Activated B cell treated with CpG ODN at 0.5 μM for 24 hours (primary cell): ENCODE measurements at regions of chr6 and their contacts with region 1.

Region 1: GRCh38 chr6:391559-392440 is at the start of gene IRF4:
- DNase-seq: no peak
- ATAC-seq: peak; percentile 74
- H3K4me3 Mint-ChIP-seq: peak within 1 kb of the TSS; percentile 98
- H3K27ac Mint-ChIP-seq: peak within 1 kb of the TSS; percentile 94
- H3K4me1 Mint-ChIP-seq: peaks cover 51% of the 10 kb centered on the region
- H3K27me3 Mint-ChIP-seq: no peaks in the 10 kb centered on the region
- CTCF ChIP-seq: no peak
- total RNA-seq, gene IRF4: 417 and 426 TPM in 2 replicates

Region 2: DNA sequence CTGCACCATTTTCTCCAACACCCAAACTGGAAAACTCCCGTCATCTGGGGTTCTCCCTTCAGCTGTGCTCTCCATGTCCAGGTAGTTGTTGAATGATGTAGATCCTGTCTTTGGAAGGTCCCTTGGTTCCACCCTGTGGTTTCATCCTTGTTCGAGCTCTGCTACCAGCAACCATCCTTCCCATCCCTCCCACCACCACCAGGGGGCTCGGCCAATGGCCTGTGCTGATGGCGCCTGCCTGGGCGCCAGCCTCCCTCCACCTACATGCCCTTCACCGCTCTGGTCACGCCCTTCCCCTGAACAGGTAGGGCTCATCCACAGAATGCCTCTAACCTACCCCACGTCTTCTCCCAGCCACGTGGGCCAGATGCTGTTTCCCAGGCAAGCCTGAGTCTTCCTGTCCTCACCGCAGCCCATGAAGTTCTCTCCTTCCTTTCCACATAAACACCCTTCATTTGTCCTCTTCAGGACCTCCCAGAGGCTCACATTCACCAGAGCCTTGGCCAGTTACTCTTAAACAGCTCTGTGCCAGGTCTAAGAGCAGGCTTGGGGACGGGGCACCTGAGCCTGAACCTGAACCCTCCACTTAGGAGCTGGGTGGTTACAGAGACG is 174.6 kb before region 1 on chr6:
- CTCF ChIA-PET with region 1: interaction called, 7 read pairs
- POLR2A ChIA-PET with region 1: interaction called, 137 read pairs
- intact Hi-C with region 1: loop called (anchors 1 kb)
- DNase-seq: no peak
- ATAC-seq: no peak
- H3K4me3 Mint-ChIP-seq: peak overlapping the region; percentile 61
- H3K27ac Mint-ChIP-seq: peak overlapping the region; percentile 90
- H3K4me1 Mint-ChIP-seq: peaks cover 81% of the 10 kb centered on the region
- H3K27me3 Mint-ChIP-seq: no peaks in the 10 kb centered on the region
- CTCF ChIP-seq: no peak

Region 3: DNA sequence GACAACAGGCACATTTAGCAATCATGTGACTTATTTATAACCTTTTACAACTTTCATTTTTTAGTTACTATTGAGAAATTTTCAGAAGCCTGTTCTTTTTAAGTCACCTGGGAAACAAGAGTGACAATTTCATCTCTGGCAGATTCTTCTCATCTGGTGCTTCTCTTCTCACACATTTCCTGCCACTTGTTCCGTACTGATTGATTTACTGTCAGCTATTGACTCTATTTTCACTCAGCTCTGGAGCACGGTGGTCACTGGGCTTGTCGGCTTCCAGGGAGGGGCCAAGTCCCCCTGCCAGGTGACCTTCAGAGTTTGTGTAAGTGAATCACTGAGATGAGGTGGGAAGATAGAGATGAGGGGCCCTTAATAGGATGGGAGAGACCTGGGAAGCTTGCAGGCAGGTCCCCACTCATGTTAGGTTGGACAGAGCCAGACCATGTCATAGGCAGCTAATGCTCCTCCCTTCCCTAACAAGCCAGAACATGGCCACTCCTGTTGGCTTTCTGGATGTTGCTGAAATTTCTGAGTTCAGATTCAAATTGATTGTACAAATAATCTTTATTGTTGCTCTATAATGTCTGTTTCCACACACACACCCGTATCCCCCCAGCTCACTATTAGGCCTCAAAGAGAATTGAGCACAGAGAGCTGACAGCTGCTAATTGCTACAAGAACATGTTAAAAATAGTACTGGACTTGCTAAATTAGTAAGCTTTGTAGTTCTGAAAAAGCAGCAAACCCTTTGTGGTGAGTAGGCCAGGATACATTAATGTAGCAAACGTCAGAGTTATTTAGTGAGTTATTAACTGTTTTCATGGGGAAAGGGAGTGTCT is 86.2 kb before region 1 on chr6:
- CTCF ChIA-PET with region 1: no interaction called
- POLR2A ChIA-PET with region 1: interaction called, 11 read pairs
- intact Hi-C with region 1: no loop called
- DNase-seq: no peak
- ATAC-seq: peak; percentile 69
- H3K4me3 Mint-ChIP-seq: no peak overlapping the region
- H3K27ac Mint-ChIP-seq: no peak overlapping the region
- H3K4me1 Mint-ChIP-seq: peaks cover 26% of the 10 kb centered on the region
- H3K27me3 Mint-ChIP-seq: no peaks in the 10 kb centered on the region
- CTCF ChIP-seq: no peak

Region 4: DNA sequence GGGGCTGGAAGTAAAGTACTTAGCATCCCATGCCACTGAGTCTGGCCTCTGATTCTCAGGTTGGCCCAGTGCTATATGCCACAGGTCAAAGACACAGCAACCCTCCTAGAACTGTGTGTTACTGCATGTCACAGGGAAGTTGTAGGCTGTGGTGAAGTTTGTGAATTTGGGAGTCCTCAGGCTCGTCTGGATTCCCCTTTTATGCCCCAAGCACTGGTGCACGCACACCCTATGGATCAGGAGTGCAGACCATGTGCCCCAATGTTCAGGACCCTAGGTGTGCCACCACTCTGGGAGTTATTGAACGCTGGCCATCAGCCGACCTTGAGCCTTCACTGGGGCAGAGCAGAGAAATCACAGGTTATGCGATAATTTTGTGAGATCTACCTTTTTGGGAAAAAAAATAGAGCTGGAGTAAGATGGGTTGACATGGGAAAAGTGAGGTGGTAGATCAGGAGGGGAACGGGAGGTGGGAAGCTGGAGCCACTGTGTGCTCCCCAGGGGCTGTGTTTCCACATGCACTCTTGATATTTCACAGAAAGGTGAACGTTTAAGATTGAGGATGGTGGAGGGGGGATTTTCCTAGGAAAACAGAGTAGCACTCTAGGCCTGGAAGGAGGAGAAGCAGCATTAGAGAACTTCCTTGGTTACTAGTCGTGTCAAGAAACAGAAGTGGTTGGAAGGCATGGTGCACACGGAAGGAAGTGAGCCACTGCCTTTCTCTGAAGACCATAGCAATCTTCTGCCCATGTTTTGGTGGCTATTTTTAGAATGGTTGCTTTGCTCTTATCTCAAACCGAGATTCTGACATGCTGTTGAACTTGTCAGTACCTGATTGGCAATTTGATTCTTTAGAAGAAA is 55.4 kb before region 1 on chr6:
- CTCF ChIA-PET with region 1: no interaction called
- POLR2A ChIA-PET with region 1: interaction called, 60 read pairs
- intact Hi-C with region 1: loop called (anchors 2 kb)
- DNase-seq: no peak
- ATAC-seq: peak; percentile 57
- H3K4me3 Mint-ChIP-seq: peak overlapping the region; percentile 62
- H3K27ac Mint-ChIP-seq: peak overlapping the region; percentile 78
- H3K4me1 Mint-ChIP-seq: peaks cover 75% of the 10 kb centered on the region
- H3K27me3 Mint-ChIP-seq: no peaks in the 10 kb centered on the region
- CTCF ChIP-seq: no peak

Region 5: GRCh38 chr6:373751-374724 is 17.8 kb before region 1 on chr6:
- CTCF ChIA-PET with region 1: interaction called, 5 read pairs
- POLR2A ChIA-PET with region 1: interaction called, 84 read pairs
- intact Hi-C with region 1: loop called (anchors 1 kb)
- DNase-seq: no peak
- ATAC-seq: no peak
- H3K4me3 Mint-ChIP-seq: no peak overlapping the region
- H3K27ac Mint-ChIP-seq: peak overlapping the region; percentile 8
- H3K4me1 Mint-ChIP-seq: peaks cover 48% of the 10 kb centered on the region
- H3K27me3 Mint-ChIP-seq: peaks cover 5% of the 10 kb centered on the region
- CTCF ChIP-seq: no peak

Region 6: GRCh38 chr6:484086-484745 is 92.4 kb after region 1 on chr6:
- CTCF ChIA-PET with region 1: interaction called, 4 read pairs
- POLR2A ChIA-PET with region 1: interaction called, 39 read pairs
- intact Hi-C with region 1: loop called (anchors 1 kb)
- DNase-seq: no peak
- ATAC-seq: peak; percentile 7
- H3K4me3 Mint-ChIP-seq: no peak overlapping the region
- H3K27ac Mint-ChIP-seq: peak overlapping the region; percentile 72
- H3K4me1 Mint-ChIP-seq: peaks cover 51% of the 10 kb centered on the region
- H3K27me3 Mint-ChIP-seq: no peaks in the 10 kb centered on the region
- CTCF ChIP-seq: no peak

Region 7: GRCh38 chr6:1381481-1382330 is 989.9 kb after region 1 on chr6:
- CTCF ChIA-PET with region 1: no interaction called
- POLR2A ChIA-PET with region 1: no interaction called
- intact Hi-C with region 1: loop called (anchors 5 kb)
- DNase-seq: peak; percentile 64
- ATAC-seq: peak; percentile 57
- H3K4me3 Mint-ChIP-seq: peak overlapping the region; percentile 32
- H3K27ac Mint-ChIP-seq: no peak overlapping the region
- H3K4me1 Mint-ChIP-seq: peaks cover 38% of the 10 kb centered on the region
- H3K27me3 Mint-ChIP-seq: peaks cover 55% of the 10 kb centered on the region
- CTCF ChIP-seq: no peak